Heart right ventricle (tissue), 16 donors: ENCODE measurements at regions of chr11 and their contacts with region 1.

Region 1: GRCh38 chr11:2099516-2100340 is 39.5 kb downstream of the IGF2 start:
- DNase-seq: no peak
- ATAC-seq: peak in 7 of 8 donors; percentile 3 to 47 (median 12)
- H3K4me3 ChIP-seq: no peak overlapping the region
- H3K27ac ChIP-seq: peak overlapping the region; percentile 21 to 89 (median 82)
- H3K4me1 ChIP-seq: peaks cover 26 to 71% (median 53%) of the 10 kb centered on the region in 9 donors
- H3K27me3 ChIP-seq: no peaks in the 10 kb centered on the region
- CTCF ChIP-seq: no peak

Region 2: DNA sequence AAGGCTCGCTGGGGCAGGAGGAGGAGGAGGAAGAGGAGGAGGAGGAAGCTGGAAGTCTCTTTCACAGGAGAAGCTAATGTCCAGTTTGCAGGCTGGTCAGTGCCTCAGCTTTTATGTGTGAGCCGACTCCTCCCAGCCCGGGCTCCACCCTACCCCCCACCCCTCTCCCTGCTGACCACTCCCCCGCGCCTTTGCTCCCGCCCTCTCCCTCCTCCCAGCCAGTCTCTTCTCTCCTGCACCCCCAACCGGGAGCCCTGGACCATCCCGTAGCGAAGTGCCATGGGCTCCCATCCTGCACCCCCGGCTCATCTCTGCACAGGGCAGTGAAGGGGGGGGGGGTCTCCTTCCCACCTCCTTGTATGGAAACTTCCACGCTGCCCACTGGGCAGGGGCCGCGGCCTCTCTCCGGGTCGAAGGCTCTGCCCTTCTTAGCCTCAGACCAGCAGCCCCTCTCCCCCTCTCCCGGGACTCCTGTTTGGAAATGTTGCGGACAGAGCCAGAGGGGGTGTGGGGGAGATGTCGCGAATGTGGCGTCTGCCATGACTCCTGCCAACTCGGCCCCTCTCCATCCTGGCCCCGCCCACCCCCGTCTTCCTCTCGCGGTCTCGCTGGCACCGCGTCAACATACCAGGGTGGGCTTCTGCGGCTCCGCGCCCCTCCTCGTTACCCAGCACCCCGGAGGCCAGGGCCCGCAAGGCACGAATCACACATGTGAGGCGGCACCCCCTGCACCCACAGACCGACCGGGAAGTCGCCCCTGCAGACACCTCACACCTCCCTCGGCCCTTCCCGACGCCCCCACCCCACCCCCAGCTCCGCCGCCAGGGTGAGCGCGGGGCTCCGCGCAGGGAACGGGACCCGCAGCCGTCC is 37.7 kb after region 1 on chr11:
- intact Hi-C with region 1: loop called in 4 of 10 experiments (anchors 5 kb)
- DNase-seq: peak; percentile 72 to 83
- ATAC-seq: peak; percentile 71 to 92 (median 84)
- H3K4me3 ChIP-seq: peak overlapping the region; percentile 12 to 61 (median 52)
- H3K27ac ChIP-seq: peak overlapping the region in 8 of 10 donors; percentile 46 to 84 (median 80)
- H3K4me1 ChIP-seq: peaks cover 0 to 40% (median 6%) of the 10 kb centered on the region in 9 donors
- H3K27me3 ChIP-seq: peaks cover 10 to 94% (median 69%) of the 10 kb centered on the region in 7 donors
- CTCF ChIP-seq: no peak

Region 3: DNA sequence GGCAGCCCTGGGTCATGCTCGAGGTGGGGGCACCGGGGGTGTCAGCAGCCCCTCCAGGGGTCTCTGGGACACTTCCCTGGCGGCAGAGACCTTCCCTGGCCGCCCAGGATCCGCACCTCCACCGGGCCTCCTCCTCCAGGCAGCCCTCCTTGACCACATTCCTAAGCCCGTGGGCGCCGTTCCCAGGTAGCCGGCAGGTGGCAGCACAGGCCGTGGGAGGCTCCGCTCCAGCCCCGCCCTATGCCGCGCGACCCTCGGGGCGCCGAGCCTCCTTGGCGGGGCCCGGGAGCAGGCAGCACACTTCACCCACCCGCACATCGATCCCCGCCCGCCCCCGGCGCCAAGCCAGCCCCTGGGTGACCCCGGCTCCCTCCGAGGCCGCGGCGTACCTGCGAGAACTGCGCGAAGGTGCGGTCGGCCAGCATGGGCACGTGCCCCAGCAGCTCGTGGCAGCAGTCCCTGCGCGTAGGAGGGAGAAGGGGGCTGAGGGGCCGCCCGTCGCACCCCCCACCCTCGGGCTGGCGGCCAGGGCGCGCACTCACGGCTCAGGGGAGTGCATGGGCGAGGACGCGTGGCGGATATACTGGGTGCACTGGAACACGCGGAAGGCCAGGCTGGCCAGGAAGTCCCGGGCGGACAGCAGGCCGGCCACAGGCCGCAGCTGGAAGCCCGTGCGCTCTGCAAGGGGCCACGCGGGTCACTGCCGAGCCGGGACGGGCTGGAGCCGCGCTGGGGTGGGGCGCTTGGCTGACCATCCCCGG is 66.5 kb after region 1 on chr11:
- intact Hi-C with region 1: loop called in 1 of 10 experiments (anchors 10 kb)
- DNase-seq: peak in 1 of 2 donors; percentile 38
- ATAC-seq: peak in 6 of 8 donors; percentile 8 to 56 (median 42)
- H3K4me3 ChIP-seq: peak overlapping the region in 8 of 10 donors; percentile 3 to 45 (median 17)
- H3K27ac ChIP-seq: no peak overlapping the region
- H3K4me1 ChIP-seq: peaks cover 0 to 12% (median 8%) of the 10 kb centered on the region in 9 donors
- H3K27me3 ChIP-seq: peaks cover 0 to 65% (median 50%) of the 10 kb centered on the region in 7 donors
- CTCF ChIP-seq: peak; percentile 36 to 65 (median 60)

Region 4: GRCh38 chr11:2178906-2179494 is 79.3 kb after region 1 on chr11:
- intact Hi-C with region 1: no loop called
- DNase-seq: no peak
- ATAC-seq: no peak
- H3K4me3 ChIP-seq: no peak overlapping the region
- H3K27ac ChIP-seq: no peak overlapping the region
- H3K4me1 ChIP-seq: no peaks in the 10 kb centered on the region
- H3K27me3 ChIP-seq: peaks cover 0 to 44% (median 16%) of the 10 kb centered on the region in 7 donors
- CTCF ChIP-seq: no peak